Testis (tissue), 5 donors: ENCODE measurements at regions of chr2 and their contacts with region 1.

Region 1: GRCh38 chr2:152566728-152567069 is 150.6 kb downstream of the PRPF40A start:
- DNase-seq: no peak
- H3K4me3 ChIP-seq: no peak overlapping the region
- H3K27ac ChIP-seq: no peak overlapping the region
- H3K4me1 ChIP-seq: peaks cover 10% of the 10 kb centered on the region
- H3K27me3 ChIP-seq: no peaks in the 10 kb centered on the region
- CTCF ChIP-seq: no peak
- POLR2A ChIP-seq: no peak

Region 2: GRCh38 chr2:152730591-152731303 is 164.0 kb after region 1 on chr2:
- intact Hi-C with region 1: loop called (anchors 10 kb)
- DNase-seq: no peak
- H3K4me3 ChIP-seq: no peak overlapping the region
- H3K27ac ChIP-seq: no peak overlapping the region
- H3K4me1 ChIP-seq: no peaks in the 10 kb centered on the region
- H3K27me3 ChIP-seq: no peaks in the 10 kb centered on the region
- CTCF ChIP-seq: no peak
- POLR2A ChIP-seq: no peak